Activated naive CD8-positive, alpha-beta T cell treated with anti-CD3 and anti-CD28 coated beads, Interleukin-2, amount 10 ng/mL, durations not matched to agents 7 days and 5 days (primary cell): ENCODE measurements at regions of chr18 and their contacts with region 1.

Region 1: DNA sequence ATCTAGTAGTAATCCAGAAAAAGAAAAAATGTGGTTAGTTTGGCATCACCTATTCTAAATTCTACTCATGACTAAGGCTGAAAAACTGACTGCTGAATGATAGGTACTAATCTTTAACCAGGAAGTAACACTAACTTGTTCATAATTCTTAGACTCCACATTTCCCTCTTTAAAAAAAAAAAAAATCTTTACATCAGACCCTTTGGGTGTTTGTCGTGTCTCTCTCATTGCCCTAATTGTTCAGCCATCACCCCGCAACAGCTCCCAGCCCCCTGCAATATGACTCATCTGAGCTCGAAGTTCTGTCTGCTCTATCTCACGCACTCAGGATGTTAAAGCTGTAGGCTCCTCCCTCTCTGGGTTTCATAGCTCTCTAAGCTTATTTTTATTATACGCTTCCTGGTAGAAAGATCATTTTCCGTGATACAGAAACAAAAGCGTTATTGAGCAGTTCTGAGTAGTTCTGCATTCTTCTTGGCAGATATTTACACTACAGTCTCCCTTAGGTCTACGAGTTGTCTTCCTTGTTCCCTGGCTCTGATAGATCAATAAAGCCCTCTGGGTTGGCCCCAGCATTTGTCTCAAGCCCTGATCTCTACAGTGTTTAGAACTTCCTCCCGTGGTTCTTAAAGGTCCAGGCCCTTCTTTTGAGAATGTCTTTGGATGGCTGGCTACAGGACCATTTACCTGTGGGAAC is 95.6 kb downstream of the TNFRSF11A start:
- DNase-seq: peak; percentile 51
- ATAC-seq: peak; percentile 97
- H3K4me3 Mint-ChIP-seq: peak overlapping the region; percentile 76
- H3K27ac Mint-ChIP-seq: peak overlapping the region; percentile 93
- H3K4me1 Mint-ChIP-seq: peaks cover 56% of the 10 kb centered on the region
- H3K27me3 Mint-ChIP-seq: no peaks in the 10 kb centered on the region

Region 2: DNA sequence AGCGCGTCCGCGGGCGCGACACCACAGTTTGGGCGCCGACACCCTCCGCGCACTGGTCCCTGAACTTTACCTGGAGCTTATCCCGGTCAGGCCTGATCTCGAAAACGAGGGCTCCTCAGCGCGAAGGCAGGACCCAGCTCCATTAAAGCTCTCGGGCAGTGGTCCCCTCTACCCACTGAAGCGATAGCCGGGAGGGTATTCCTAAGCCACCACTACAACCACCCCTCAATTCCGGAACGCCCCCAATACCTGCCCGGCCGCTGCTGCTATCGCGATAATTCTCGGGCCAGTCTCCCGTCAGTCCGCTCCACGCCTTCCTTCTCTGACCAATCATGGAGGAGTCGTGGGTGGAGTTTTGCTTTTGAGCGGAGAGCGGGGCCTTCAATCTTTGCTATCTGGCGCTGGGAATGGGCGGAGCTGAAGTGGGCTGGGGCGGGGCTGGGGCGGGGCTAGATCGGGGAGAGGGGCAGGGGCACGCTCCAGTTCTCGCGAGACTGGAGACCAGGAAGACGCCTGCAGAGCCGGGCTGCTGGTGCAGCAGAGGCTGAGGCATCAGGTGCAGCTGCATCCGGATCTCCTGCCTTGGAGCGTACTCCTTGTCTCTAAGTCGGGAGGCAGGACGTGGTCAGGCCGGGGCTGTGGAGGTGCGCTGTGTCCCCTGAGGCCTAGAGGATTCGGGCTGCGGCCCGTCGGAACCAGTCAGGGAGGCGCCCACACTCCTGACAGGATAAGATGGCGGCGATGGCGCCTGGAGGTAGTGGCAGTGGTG is 233.7 kb before region 1 on chr18 and contains the starts of genes PIGN and RELCH:
- POLR2A ChIA-PET with region 1: interaction called, 24 read pairs
- DNase-seq: peak; percentile 86
- ATAC-seq: peak; percentile 94
- H3K4me3 Mint-ChIP-seq: peak within 1 kb of the TSS; percentile 95
- H3K27ac Mint-ChIP-seq: peak within 1 kb of the TSS; percentile 97
- H3K4me1 Mint-ChIP-seq: peaks cover 38% of the 10 kb centered on the region
- H3K27me3 Mint-ChIP-seq: no peaks in the 10 kb centered on the region
- total RNA-seq, gene PIGN: 25.0 to 28.2 TPM
- total RNA-seq, gene RELCH: 42.9 to 46.3 TPM

Region 3: GRCh38 chr18:62396381-62396780 is 24.3 kb before region 1 on chr18:
- POLR2A ChIA-PET with region 1: no interaction called
- DNase-seq: no peak
- ATAC-seq: no peak
- H3K4me3 Mint-ChIP-seq: no peak overlapping the region
- H3K27ac Mint-ChIP-seq: no peak overlapping the region
- H3K4me1 Mint-ChIP-seq: peaks cover 10% of the 10 kb centered on the region
- H3K27me3 Mint-ChIP-seq: peaks cover 5% of the 10 kb centered on the region

Region 4: GRCh38 chr18:62576845-62577512 is 156.3 kb after region 1 on chr18:
- POLR2A ChIA-PET with region 1: no interaction called
- DNase-seq: no peak
- ATAC-seq: no peak
- H3K4me3 Mint-ChIP-seq: no peak overlapping the region
- H3K27ac Mint-ChIP-seq: peak overlapping the region; percentile 7
- H3K4me1 Mint-ChIP-seq: peaks cover 14% of the 10 kb centered on the region
- H3K27me3 Mint-ChIP-seq: no peaks in the 10 kb centered on the region